Activated T-helper 1 cell treated with anti-CD3 and anti-CD28 coated beads, Interleukin-12 subunit alpha, Interleukin-12 subunit beta, Interleukin-2, Interleukin-4 antibody, amounts not matched to agents 30 ng/mL and 10 ng/mL and 1 ng/mL, durations not matched to agents 14 hours and 24 hours and 36 hours (primary cell): ENCODE measurements at regions of chr2 and their contacts with region 1.

Region 1: GRCh38 chr2:109213646-109214417 is 84.8 kb downstream of the SH3RF3 start:
- DNase-seq: peak; percentile 74
- H3K4me3 Mint-ChIP-seq: peak overlapping the region; percentile 72
- H3K27ac Mint-ChIP-seq: peak overlapping the region; percentile 93
- H3K4me1 Mint-ChIP-seq: peaks cover 82% of the 10 kb centered on the region
- H3K27me3 Mint-ChIP-seq: peaks cover 68% of the 10 kb centered on the region

Region 2: DNA sequence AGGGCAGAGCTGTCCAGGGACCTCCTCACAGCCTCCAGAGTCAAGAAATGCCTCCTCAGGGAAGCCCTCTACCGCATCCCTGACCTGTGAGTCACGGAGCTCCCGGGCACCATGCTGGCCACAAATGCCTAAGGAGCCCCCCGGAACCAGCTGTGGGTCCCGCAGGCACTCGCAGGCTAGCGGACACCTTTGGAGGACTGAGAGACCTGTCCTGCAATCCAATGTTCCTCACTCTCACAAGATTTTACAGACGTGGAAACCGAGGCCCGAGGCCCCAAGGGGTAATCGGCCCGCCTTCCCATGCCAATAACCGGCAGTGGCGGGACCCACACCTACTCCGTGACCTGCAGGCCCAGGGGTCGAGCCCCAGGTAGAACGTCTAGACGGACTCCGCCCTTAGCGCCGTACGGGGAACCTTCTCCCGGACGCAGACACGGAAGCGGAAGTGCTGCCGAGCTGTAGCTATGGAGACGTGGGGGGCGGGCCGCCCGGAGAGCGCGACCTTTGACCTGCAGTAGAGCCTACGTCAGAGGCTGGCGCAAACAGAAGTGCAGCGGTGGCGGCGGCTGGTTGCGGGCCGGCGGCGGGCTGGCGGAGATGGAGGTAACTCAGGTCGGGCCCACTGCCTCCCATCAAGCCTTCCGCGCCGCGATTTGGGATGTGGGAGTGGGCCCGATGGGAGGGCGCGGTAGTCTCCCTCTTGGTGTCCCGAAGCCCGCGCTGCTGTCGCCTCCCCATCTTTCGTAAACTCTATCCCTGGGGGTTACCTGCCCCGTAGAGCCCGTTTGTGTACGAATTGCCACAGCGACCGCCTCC is 764.9 kb before region 1 on chr2 and contains the start of gene GCC2:
- intact Hi-C with region 1: loop called (anchors 5 kb)
- DNase-seq: peak; percentile 95
- H3K4me3 Mint-ChIP-seq: peak within 1 kb of the TSS; percentile 91
- H3K27ac Mint-ChIP-seq: peak within 1 kb of the TSS; percentile 85
- H3K4me1 Mint-ChIP-seq: peaks cover 44% of the 10 kb centered on the region
- H3K27me3 Mint-ChIP-seq: no peaks in the 10 kb centered on the region
- total RNA-seq, gene GCC2: 43.7 and 44.1 TPM in 2 replicates

Region 3: DNA sequence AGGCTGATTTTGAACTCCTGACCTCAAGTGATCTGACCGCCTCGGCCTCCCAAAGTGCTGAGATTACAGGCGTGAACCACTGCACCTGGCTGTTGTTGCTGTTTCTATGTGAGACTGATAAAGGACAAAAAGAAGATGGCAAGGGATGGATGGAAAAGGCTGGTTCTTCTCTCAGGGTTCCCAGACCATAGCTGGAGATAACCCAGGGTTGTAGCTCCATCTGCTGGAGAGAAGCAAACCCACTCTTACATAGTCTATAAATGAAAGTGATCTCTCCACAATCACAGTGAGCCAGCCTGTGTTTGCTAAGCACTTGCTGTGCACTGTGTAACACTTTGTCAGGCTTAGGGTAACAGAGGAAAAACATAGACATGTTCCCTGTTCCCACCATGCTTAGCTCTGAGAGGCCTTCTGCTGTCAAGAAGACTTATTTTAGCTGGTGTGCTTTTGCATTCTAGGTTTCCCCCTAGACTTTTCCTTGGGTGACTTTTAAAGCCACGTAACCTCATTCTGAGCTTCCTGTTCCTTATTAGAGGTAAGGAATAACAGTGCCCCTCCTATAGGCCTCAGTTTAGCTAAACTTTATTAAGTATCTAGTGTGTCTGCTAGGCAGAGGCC is 629.8 kb before region 1 on chr2:
- intact Hi-C with region 1: no loop called
- DNase-seq: peak; percentile 28
- H3K4me3 Mint-ChIP-seq: no peak overlapping the region
- H3K27ac Mint-ChIP-seq: no peak overlapping the region
- H3K4me1 Mint-ChIP-seq: peaks cover 43% of the 10 kb centered on the region
- H3K27me3 Mint-ChIP-seq: no peaks in the 10 kb centered on the region

Region 4: GRCh38 chr2:108594132-108594981 is 619.5 kb before region 1 on chr2:
- intact Hi-C with region 1: loop called (anchors 10 kb)
- DNase-seq: no peak
- H3K4me3 Mint-ChIP-seq: peak overlapping the region; percentile 72
- H3K27ac Mint-ChIP-seq: peak overlapping the region; percentile 92
- H3K4me1 Mint-ChIP-seq: peaks cover 63% of the 10 kb centered on the region
- H3K27me3 Mint-ChIP-seq: no peaks in the 10 kb centered on the region

Region 5: GRCh38 chr2:109031476-109032228 is 182.2 kb before region 1 on chr2:
- intact Hi-C with region 1: loop called (anchors 5 kb)
- DNase-seq: peak; percentile 38
- H3K4me3 Mint-ChIP-seq: peak overlapping the region; percentile 86
- H3K27ac Mint-ChIP-seq: peak overlapping the region; percentile 89
- H3K4me1 Mint-ChIP-seq: peaks cover 27% of the 10 kb centered on the region
- H3K27me3 Mint-ChIP-seq: no peaks in the 10 kb centered on the region

Region 6: DNA sequence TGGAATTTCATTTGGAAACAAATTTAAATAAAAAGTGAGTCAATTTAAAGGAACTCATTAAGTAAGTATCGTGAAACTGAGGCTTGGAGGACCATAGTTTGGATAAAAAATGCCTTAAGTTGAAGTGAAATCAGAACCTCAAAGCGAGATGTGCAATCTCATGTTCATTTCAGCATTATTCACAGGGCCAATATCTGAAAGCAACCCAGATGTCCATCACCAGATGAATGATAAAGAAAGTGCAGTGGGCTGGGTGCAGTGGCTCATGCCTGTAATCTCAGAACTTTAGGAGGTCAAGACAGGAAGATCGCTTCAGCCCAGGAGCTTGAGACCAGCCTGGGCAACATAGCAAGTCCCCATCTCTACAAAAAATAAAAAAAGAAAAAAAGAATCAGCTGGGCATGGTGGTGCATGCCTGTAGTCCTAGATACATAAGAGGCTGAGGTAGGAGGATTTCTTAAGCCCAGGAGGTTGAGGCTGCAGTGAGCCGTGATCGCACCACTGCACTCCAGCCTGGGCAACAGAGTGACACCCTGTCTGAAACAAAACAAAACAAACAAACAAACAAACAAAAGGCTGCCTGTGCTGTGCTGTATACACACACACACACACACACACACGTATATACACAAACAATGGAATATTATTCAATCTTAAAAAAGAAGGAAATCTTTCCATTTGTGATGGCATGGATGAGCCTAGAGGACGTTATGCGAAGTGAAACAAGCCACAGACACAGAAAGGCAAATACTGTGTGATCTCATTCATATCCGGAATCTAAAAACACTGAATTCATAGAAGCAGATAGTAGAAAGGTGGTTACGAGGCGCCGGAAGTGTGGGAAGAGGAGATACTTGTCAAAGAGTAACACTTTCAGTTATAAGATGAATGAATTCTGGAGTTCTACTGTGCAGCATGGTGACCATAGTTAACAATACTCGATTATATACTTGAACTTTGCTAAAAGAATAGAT is 70.3 kb before region 1 on chr2:
- intact Hi-C with region 1: loop called (anchors 1 kb)
- DNase-seq: peak; percentile 62
- H3K4me3 Mint-ChIP-seq: peak overlapping the region; percentile 16
- H3K27ac Mint-ChIP-seq: peak overlapping the region; percentile 46
- H3K4me1 Mint-ChIP-seq: peaks cover 35% of the 10 kb centered on the region
- H3K27me3 Mint-ChIP-seq: peaks cover 53% of the 10 kb centered on the region

Region 7: DNA sequence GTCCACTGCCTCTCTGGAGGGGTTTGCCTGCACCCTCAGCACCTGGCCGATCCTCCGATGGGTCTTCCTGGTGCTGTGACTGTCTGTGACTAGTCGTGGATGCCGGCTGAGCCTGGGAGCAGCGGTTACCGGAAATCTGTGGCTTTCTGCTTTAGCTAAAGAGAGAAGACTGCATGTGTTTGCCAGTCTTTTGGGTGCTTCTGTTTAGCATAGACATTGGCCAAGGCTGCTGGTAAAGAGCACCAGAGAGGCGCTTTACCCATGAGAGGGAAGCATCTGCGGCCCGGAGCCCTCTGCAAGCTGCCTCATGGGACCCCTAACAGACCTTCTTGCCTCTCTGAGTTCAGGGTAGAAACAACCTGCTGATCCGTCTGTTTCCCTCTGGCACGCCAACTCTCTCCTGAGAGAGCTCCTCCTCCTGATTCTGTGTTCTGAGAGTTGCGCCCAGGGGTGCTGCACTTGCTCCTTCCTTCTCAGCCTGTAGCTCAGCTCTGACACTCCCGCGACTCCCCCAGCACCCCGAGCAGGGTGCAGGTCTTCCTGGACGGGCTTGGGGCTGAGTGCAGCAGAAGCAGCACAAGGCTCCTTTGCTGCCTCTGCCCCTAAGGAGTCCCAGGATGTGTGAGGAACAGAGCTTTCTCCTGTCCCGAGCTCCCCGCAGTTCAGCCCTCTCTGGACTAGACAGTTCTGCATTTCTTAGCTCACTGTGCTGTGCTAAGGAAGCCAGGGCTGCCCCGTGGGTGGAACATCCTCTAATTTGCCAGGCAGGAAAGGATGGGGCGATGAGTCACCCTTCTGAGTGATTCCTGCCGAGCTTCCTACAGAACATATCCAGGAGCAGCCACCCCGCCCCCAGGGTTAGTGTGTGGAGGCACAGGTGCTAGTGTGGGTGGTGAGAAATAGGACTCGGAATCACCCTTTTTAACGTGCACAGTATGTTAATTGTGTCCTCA is 118.3 kb after region 1 on chr2:
- intact Hi-C with region 1: loop called (anchors 5 kb)
- DNase-seq: peak; percentile 12
- H3K4me3 Mint-ChIP-seq: peak overlapping the region; percentile 76
- H3K27ac Mint-ChIP-seq: peak overlapping the region; percentile 6
- H3K4me1 Mint-ChIP-seq: peaks cover 29% of the 10 kb centered on the region
- H3K27me3 Mint-ChIP-seq: peaks cover 32% of the 10 kb centered on the region

Region 8: GRCh38 chr2:109356324-109357035 is 142.6 kb after region 1 on chr2:
- intact Hi-C with region 1: no loop called
- DNase-seq: no peak
- H3K4me3 Mint-ChIP-seq: no peak overlapping the region
- H3K27ac Mint-ChIP-seq: no peak overlapping the region
- H3K4me1 Mint-ChIP-seq: no peaks in the 10 kb centered on the region
- H3K27me3 Mint-ChIP-seq: peaks cover 15% of the 10 kb centered on the region

Region 9: DNA sequence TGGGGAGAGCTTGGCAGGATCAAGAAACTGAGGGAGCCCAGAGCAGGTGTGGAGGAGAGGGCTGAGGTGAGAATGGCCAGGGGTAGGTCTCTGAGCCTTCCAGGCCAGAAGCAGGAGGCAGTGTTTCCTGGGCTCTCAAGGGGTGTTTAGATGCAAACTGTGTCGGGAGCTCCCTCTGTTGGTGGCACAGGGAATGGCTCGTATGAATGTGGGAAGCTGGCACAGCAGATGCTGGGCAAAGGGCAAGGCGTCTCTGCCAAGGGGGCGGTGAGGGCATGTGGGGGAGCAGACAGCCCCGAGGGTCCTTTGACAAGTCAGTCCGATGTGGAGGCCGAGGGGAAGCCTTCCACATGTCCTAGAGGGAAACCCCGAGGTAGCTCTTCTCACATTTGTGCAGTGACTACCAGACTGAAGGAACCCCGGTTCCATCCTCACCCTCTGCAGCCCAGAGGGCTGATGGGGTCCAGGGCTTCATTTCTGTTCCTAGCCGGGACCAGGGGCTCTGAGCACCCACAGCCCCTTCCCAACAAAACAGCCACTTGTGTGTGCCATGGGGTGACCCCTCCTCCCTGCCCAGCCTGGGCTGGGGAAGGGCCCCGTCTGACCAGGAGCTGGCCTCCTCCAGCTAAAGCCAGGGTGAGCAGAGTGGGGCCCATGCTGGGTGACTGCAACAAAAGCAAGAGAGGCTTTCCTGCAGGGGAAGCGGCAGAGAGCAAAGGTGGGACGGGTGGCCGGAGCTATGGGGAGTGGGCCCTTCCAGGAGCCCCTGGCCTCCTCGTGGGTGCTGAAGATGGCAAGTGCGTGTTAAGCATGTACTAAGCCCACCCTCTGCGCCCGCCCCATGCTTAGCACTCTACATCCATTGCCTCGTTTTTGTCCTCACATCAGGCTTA is 296.6 kb after region 1 on chr2:
- intact Hi-C with region 1: loop called (anchors 5 kb)
- DNase-seq: peak; percentile 51
- H3K4me3 Mint-ChIP-seq: no peak overlapping the region
- H3K27ac Mint-ChIP-seq: no peak overlapping the region
- H3K4me1 Mint-ChIP-seq: peaks cover 9% of the 10 kb centered on the region
- H3K27me3 Mint-ChIP-seq: no peaks in the 10 kb centered on the region